Caco-2 (cell line): ENCODE measurements at regions of chr5 and their contacts with region 1.

Region 1: DNA sequence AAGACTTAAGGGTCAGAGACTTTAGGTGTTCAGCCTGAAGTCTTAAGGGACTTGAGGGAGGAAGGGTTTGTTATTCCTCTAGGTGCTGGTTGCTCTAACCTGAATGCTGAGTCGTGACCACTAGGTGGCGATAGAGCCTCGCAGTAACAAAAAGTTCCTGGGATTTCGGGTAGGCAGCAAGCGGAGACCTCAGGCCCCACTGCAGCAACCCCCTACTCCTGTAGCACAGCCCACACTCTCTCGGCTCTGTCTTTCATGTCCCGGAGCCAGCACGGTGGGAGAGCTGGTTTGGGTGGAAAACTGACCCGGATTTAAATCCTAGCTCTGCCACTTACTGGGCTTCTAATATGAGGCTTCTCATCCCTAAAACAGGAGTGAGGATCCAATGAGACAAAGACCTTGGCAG is 100.3 kb upstream of the PANK3 start:
- DNase-seq: peak; percentile 79 to 84
- H3K4me3 ChIP-seq: no peak overlapping the region
- H3K4me3 Mint-ChIP-seq: no peak overlapping the region
- H3K27ac Mint-ChIP-seq: no peak overlapping the region
- H3K4me1 ChIP-seq: peaks cover 12% of the 10 kb centered on the region
- H3K4me1 Mint-ChIP-seq: peaks cover 26% of the 10 kb centered on the region
- H3K27me3 ChIP-seq: no peaks in the 10 kb centered on the region
- H3K27me3 Mint-ChIP-seq: no peaks in the 10 kb centered on the region
- CTCF ChIP-seq: peak; percentile 92 to 94

Region 2: DNA sequence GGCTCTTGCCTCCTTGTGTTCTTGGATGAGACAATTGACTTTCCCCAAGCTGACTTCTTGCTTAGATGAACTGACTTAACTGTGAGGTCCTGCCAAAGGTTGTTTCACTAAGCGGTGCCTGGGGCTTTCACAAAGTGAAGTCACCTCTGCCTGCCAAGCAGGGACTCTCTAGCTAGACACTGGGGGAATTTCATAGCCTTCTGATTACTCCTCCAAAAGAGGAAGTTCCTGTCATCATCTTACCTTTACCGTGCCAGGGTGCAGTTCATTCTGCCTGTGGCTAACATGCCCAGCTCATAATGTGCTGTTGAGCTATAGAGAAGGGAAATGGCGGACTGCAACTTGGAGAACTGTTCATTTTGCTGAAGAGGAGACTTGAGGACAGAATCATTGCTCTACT is 860.1 kb before region 1 on chr5:
- CTCF ChIA-PET with region 1: no interaction called
- POLR2A ChIA-PET with region 1: no interaction called
- intact Hi-C with region 1: no loop called
- DNase-seq: no peak
- H3K4me3 ChIP-seq: no peak overlapping the region
- H3K4me3 Mint-ChIP-seq: no peak overlapping the region
- H3K27ac Mint-ChIP-seq: no peak overlapping the region
- H3K4me1 ChIP-seq: no peaks in the 10 kb centered on the region
- H3K4me1 Mint-ChIP-seq: peaks cover 9% of the 10 kb centered on the region
- H3K27me3 ChIP-seq: no peaks in the 10 kb centered on the region
- H3K27me3 Mint-ChIP-seq: no peaks in the 10 kb centered on the region
- CTCF ChIP-seq: no peak

Region 3: GRCh38 chr5:168691891-168692290 is 12.4 kb after region 1 on chr5:
- CTCF ChIA-PET with region 1: interaction called, 4 read pairs
- POLR2A ChIA-PET with region 1: no interaction called
- intact Hi-C with region 1: loop called (anchors 1 kb)
- DNase-seq: no peak
- H3K4me3 ChIP-seq: no peak overlapping the region
- H3K4me3 Mint-ChIP-seq: peak overlapping the region; percentile 3
- H3K27ac Mint-ChIP-seq: peak overlapping the region; percentile 88
- H3K4me1 ChIP-seq: peaks cover 65% of the 10 kb centered on the region
- H3K4me1 Mint-ChIP-seq: peaks cover 67% of the 10 kb centered on the region
- H3K27me3 ChIP-seq: no peaks in the 10 kb centered on the region
- H3K27me3 Mint-ChIP-seq: no peaks in the 10 kb centered on the region
- CTCF ChIP-seq: no peak

Region 4: DNA sequence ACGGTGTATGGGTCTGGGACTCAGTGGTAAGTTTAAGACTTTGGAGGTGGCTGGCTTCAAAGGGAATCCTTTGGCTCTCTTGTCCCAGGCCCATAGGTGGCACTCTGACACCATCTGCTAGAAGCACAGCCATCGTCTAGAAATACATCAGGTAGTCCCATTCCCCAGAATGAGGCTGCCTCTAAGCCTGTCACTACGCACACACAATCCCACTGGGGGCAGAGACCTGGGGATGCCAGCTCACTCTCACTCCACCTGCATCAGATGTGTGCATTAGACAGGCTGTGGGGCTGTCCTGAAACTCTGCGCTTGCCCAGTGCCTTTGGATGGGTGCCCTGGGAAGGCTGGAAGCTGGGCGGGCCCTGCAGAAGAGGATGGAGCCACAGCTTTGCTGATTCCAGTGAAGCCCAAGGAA is 27.1 kb after region 1 on chr5:
- CTCF ChIA-PET with region 1: no interaction called
- POLR2A ChIA-PET with region 1: no interaction called
- intact Hi-C with region 1: loop called (anchors 1 kb)
- DNase-seq: peak; percentile 68
- H3K4me3 ChIP-seq: no peak overlapping the region
- H3K4me3 Mint-ChIP-seq: no peak overlapping the region
- H3K27ac Mint-ChIP-seq: peak overlapping the region; percentile 30
- H3K4me1 ChIP-seq: no peaks in the 10 kb centered on the region
- H3K4me1 Mint-ChIP-seq: no peaks in the 10 kb centered on the region
- H3K27me3 ChIP-seq: no peaks in the 10 kb centered on the region
- H3K27me3 Mint-ChIP-seq: no peaks in the 10 kb centered on the region
- CTCF ChIP-seq: peak; percentile 63 to 84

Region 5: GRCh38 chr5:168874713-168875380 is 195.3 kb after region 1 on chr5:
- CTCF ChIA-PET with region 1: no interaction called
- POLR2A ChIA-PET with region 1: no interaction called
- intact Hi-C with region 1: loop called (anchors 1 kb)
- DNase-seq: peak; percentile 33 to 47
- H3K4me3 ChIP-seq: no peak overlapping the region
- H3K4me3 Mint-ChIP-seq: no peak overlapping the region
- H3K27ac Mint-ChIP-seq: no peak overlapping the region
- H3K4me1 ChIP-seq: peaks cover 6% of the 10 kb centered on the region; the same call in 1 of the 2 replicates
- H3K4me1 Mint-ChIP-seq: peaks cover 7% of the 10 kb centered on the region
- H3K27me3 ChIP-seq: no peaks in the 10 kb centered on the region
- H3K27me3 Mint-ChIP-seq: peaks cover 4% of the 10 kb centered on the region
- CTCF ChIP-seq: peak; percentile 45 to 63

Region 6: DNA sequence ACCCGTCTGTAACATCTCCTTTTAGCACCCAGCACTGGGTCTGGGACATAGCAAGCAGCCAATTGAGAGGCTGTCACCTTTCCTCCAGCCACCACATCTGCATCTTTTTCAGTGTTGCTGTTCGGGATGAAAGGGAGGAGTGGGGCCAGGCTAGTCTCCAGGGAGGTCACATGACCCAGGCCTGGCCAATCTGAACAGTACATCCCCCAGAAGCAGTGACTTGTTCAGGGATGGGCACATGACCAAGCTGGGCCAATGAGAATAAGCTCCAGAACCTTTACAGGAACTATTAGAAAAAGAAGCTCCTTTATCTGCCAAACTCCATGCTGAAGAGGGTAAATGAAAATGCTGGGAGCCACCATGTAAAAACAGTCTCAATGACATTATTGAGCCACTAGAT is 262.4 kb after region 1 on chr5:
- CTCF ChIA-PET with region 1: no interaction called
- POLR2A ChIA-PET with region 1: no interaction called
- intact Hi-C with region 1: loop called (anchors 1 kb)
- DNase-seq: no peak
- H3K4me3 ChIP-seq: no peak overlapping the region
- H3K4me3 Mint-ChIP-seq: no peak overlapping the region
- H3K27ac Mint-ChIP-seq: no peak overlapping the region
- H3K4me1 ChIP-seq: peaks cover 28% of the 10 kb centered on the region
- H3K4me1 Mint-ChIP-seq: peaks cover 26% of the 10 kb centered on the region
- H3K27me3 ChIP-seq: no peaks in the 10 kb centered on the region
- H3K27me3 Mint-ChIP-seq: no peaks in the 10 kb centered on the region
- CTCF ChIP-seq: no peak

Region 7: GRCh38 chr5:168947212-168947868 is 267.8 kb after region 1 on chr5:
- CTCF ChIA-PET with region 1: no interaction called
- POLR2A ChIA-PET with region 1: no interaction called
- intact Hi-C with region 1: loop called (anchors 1 kb)
- DNase-seq: peak; percentile 71 to 77
- H3K4me3 ChIP-seq: no peak overlapping the region
- H3K4me3 Mint-ChIP-seq: no peak overlapping the region
- H3K27ac Mint-ChIP-seq: peak overlapping the region; percentile 80
- H3K4me1 ChIP-seq: peaks cover 34% of the 10 kb centered on the region
- H3K4me1 Mint-ChIP-seq: peaks cover 33% of the 10 kb centered on the region
- H3K27me3 ChIP-seq: no peaks in the 10 kb centered on the region
- H3K27me3 Mint-ChIP-seq: no peaks in the 10 kb centered on the region
- CTCF ChIP-seq: peak; percentile 86 to 88

Region 8: DNA sequence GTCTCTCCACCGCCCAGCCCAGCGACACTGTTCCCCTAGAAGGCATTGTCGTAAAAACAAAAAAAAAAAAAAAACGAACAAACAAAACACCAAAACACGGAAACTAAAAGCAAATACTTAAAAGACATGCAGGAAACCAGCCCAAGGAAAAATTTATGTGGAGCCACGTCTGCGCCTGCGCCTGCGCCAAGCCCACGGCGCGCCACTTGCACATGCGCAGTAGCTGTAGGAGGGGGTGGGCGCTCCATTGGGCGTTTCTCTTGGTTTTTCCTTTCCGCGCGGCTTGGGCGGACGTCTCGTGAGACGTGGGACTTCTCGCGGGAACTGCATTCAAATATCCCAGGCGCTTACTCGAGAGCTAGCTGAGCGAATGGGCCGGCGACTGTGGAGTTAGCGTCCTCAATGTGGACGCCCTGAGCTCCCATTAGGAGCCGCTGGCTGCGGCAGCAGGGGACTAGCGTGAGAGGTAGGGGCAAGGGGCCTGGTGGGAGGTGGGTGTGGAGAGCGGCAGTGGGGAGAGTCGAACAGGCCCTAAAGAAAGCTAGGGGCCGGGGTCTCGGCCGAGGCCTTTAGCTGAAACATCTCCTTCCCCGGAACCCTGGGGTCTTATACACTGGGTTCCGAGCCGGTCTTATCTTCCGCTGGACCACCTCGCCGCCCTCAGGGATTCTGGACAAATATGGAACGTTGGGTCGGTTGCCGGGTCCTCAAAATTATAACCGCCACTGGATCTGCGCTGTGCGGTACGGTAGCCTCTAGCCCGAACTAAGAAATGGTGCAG is 904.1 kb after region 1 on chr5 and contains the start of gene SPDL1:
- CTCF ChIA-PET with region 1: no interaction called
- POLR2A ChIA-PET with region 1: no interaction called
- intact Hi-C with region 1: loop called (anchors 1 kb)
- DNase-seq: peak; percentile 95 to 97
- H3K4me3 ChIP-seq: peak within 1 kb of the TSS; percentile 84
- H3K4me3 Mint-ChIP-seq: peak within 1 kb of the TSS; percentile 94
- H3K27ac Mint-ChIP-seq: peak within 1 kb of the TSS; percentile 97
- H3K4me1 ChIP-seq: no peaks in the 10 kb centered on the region; the same call in 1 of the 2 replicates
- H3K4me1 Mint-ChIP-seq: peaks cover 28% of the 10 kb centered on the region
- H3K27me3 ChIP-seq: no peaks in the 10 kb centered on the region
- H3K27me3 Mint-ChIP-seq: no peaks in the 10 kb centered on the region
- CTCF ChIP-seq: no peak
- total RNA-seq, gene SPDL1: 57.8 and 60.0 TPM in 2 replicates